Gastrocnemius medialis (tissue), 4 donors: ENCODE measurements at regions of chr19 and their contacts with region 1.

Region 1: DNA sequence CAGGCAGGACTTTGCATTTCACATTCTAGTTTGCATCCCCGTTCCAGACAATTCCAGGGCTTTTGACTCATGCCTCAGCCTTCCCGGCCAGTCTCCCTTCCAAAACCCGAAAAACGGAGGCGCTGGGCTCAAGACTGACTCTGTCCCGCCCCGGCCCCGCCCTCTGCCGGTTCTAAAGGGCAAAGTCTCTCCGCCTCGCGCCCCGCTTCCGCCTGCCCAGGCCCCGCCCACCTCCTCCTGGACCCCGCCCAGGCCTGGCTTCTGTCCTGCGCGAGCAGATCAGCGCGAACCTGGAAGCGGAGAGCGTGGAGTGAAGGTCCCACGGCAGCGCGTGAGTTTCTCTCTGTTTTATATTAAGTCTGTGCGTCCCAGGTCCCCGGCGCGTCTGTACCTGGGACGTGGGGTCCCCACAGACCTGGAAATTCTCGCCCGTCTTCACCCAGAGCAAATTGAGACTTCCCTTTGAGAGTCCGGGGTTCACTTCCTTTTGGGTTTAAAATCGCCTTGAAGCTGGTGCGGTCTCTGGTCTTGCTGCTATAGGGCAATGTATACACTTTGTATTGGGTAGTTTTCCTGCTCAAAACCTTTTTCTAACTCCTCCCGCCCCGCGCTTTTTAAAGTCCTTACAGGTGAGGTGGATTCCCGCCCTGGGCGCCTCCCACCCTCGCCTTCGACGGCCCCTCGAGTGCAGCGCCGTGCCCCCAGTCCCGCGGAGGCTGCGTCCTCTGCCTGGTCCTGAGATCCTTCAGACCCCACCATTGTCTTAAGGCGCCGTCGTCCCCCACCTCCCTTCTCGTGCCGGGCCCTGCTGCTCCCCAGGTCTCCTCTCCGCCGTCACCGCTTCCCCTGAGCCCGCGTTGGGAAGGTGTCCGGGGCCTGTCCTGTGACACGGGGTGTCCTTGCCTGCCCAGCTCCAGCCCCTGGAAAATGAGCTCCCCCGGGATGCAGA is 31.2 kb downstream of the ZNF701 start:
- DNase-seq: peak; percentile 80 to 83
- ATAC-seq: peak; percentile 95 to 96
- H3K4me3 ChIP-seq: peak overlapping the region; percentile 54 to 100 (median 72)
- H3K27ac ChIP-seq: peak overlapping the region; percentile 25 to 66 (median 56)
- H3K4me1 ChIP-seq: peaks cover 10 to 17% of the 10 kb centered on the region in 2 donors
- H3K27me3 ChIP-seq: peaks cover 0 to 6% (median 0%) of the 10 kb centered on the region in 3 donors
- CTCF ChIP-seq: peak in 4 of 5 experiments; percentile 12 to 59 (median 38)
- POLR2A ChIP-seq: no peak

Region 2: DNA sequence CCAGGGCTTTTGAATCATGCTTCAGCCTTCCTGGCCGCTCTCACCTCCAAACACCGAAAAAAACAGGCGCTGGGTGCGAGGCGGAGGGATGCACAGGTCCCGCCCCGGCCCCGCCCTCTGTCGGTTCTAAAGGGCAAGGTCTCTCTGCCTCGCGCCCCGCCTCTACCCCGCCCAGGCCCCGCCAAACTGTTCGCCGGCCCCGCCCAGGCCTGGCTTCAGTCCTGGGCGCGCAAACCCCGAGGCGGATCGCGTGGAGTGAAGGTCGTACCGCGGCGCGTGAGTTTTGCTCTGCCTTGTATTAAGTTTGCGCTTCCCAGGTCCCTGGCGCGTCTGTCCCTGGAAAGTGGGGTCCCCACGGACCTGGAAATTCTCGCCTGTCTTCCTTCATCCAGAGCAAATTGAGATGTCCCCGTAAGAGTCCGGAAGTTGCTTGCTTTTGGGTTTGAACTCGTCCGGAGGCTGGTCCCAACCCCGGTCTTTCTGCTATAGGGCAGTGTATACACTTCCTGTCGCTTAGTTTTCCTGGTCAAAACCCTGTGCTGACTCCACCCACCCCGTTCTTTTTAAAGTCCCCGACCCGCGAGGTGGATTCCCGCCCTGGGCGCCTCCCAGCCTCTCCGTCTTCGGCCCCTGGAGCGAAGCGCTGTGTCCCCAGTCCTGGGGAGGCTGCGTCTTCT is 65.4 kb before region 1 on chr19:
- in situ Hi-C with region 1: no loop called
- intact Hi-C with region 1: loop called (anchors 2 kb)
- DNase-seq: peak; percentile 68 to 79
- ATAC-seq: peak; percentile 69 to 80
- H3K4me3 ChIP-seq: peak overlapping the region; percentile 59 to 74 (median 70)
- H3K27ac ChIP-seq: peak overlapping the region; percentile 69 to 88 (median 82)
- H3K4me1 ChIP-seq: peaks cover 25% of the 10 kb centered on the region in 2 donors
- H3K27me3 ChIP-seq: no peaks in the 10 kb centered on the region
- CTCF ChIP-seq: peak in 2 of 5 experiments; percentile 39 to 47
- POLR2A ChIP-seq: peak; percentile 32 to 44

Region 3: GRCh38 chr19:52570000-52570861 is 31.1 kb before region 1 on chr19 and contains the start of gene ZNF701:
- in situ Hi-C with region 1: no loop called
- intact Hi-C with region 1: loop called (anchors 2 kb)
- DNase-seq: peak; percentile 88 to 91
- ATAC-seq: peak; percentile 99
- H3K4me3 ChIP-seq: peak within 1 kb of the TSS; percentile 66 to 98 (median 80)
- H3K27ac ChIP-seq: peak within 1 kb of the TSS; percentile 70 to 83 (median 79)
- H3K4me1 ChIP-seq: peaks cover 6 to 8% of the 10 kb centered on the region in 2 donors
- H3K27me3 ChIP-seq: no peaks in the 10 kb centered on the region
- CTCF ChIP-seq: peak in 4 of 5 experiments; percentile 43 to 60 (median 48)
- POLR2A ChIP-seq: peak; percentile 85 to 86
- total RNA-seq, gene ZNF701: 4.0 to 6.2 (median 4.8) TPM

Region 4: GRCh38 chr19:52637718-52638585 is 36.7 kb after region 1 on chr19 and contains the start of gene ZNF83:
- in situ Hi-C with region 1: no loop called
- intact Hi-C with region 1: loop called (anchors 2 kb)
- DNase-seq: peak; percentile 80 to 82
- ATAC-seq: peak; percentile 90 to 95
- H3K4me3 ChIP-seq: peak within 1 kb of the TSS; percentile 62 to 74 (median 72)
- H3K27ac ChIP-seq: peak within 1 kb of the TSS; percentile 61 to 77 (median 67)
- H3K4me1 ChIP-seq: peaks cover 0 to 11% of the 10 kb centered on the region in 2 donors
- H3K27me3 ChIP-seq: peaks cover 0 to 6% (median 4%) of the 10 kb centered on the region in 3 donors
- CTCF ChIP-seq: no peak
- POLR2A ChIP-seq: peak in 1 of 2 donors; percentile 13
- total RNA-seq, gene ZNF83: 2.8 to 8.0 (median 4.0) TPM

Region 5: GRCh38 chr19:52670046-52670445 is 68.7 kb after region 1 on chr19:
- in situ Hi-C with region 1: no loop called
- intact Hi-C with region 1: no loop called
- DNase-seq: no peak
- ATAC-seq: no peak
- H3K4me3 ChIP-seq: no peak overlapping the region
- H3K27ac ChIP-seq: no peak overlapping the region
- H3K4me1 ChIP-seq: no peaks in the 10 kb centered on the region
- H3K27me3 ChIP-seq: no peaks in the 10 kb centered on the region
- CTCF ChIP-seq: no peak
- POLR2A ChIP-seq: no peak

Region 6: GRCh38 chr19:53906211-53907192 is 1305.2 kb after region 1 on chr19:
- in situ Hi-C with region 1: no loop called
- intact Hi-C with region 1: no loop called
- DNase-seq: no peak
- ATAC-seq: no peak
- H3K4me3 ChIP-seq: peak overlapping the region in 1 of 4 donors; percentile 25
- H3K27ac ChIP-seq: no peak overlapping the region
- H3K4me1 ChIP-seq: peaks cover 0 to 3% of the 10 kb centered on the region in 2 donors
- H3K27me3 ChIP-seq: peaks cover 48 to 51% (median 50%) of the 10 kb centered on the region in 3 donors
- CTCF ChIP-seq: peak; percentile 46 to 94 (median 85)
- POLR2A ChIP-seq: no peak